AG04450 (cell line): ENCODE measurements at regions of chr6 and their contacts with region 1.

Region 1: DNA sequence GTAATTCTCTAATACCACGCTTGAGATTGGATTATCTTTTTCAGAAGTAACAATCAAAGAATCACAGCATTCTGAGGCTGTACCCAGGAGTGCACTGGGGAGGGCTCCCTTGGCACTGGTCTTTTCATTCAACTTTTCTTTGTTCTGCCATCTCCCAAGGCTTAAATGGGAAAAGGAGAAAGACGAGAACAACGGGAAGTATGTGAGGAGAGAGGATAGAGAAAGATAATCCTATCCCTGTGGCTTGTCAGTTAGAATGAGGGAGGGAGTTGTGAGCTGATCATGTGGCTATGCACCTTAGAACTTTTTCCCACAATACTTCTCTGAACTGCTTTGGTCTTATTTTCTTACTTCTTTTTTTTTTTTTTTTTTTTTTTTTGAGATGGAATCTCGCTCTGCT is 83.1 kb downstream of the CAP2 start:
- DNase-seq: no peak
- H3K4me3 ChIP-seq: no peak overlapping the region
- H3K27ac ChIP-seq: no peak overlapping the region
- H3K27me3 ChIP-seq: no peaks in the 10 kb centered on the region
- CTCF ChIP-seq: no peak

Region 2: GRCh38 chr6:17397764-17398199 is 78.7 kb before region 1 on chr6:
- CTCF ChIA-PET with region 1: no interaction called
- POLR2A ChIA-PET with region 1: no interaction called
- DNase-seq: no peak
- H3K4me3 ChIP-seq: no peak overlapping the region
- H3K27ac ChIP-seq: no peak overlapping the region
- H3K27me3 ChIP-seq: no peaks in the 10 kb centered on the region
- CTCF ChIP-seq: no peak

Region 3: GRCh38 chr6:17556014-17556413 is 79.5 kb after region 1 on chr6:
- CTCF ChIA-PET with region 1: no interaction called
- POLR2A ChIA-PET with region 1: interaction called, 10 read pairs
- DNase-seq: no peak
- H3K4me3 ChIP-seq: no peak overlapping the region
- H3K27ac ChIP-seq: no peak overlapping the region
- H3K27me3 ChIP-seq: no peaks in the 10 kb centered on the region
- CTCF ChIP-seq: no peak